Activated CD4-positive, alpha-beta T cell treated with anti-CD3 and anti-CD28 coated beads, Interleukin-2, amount 10 ng/mL, durations not matched to agents 24 days and 14 days (primary cell): ENCODE measurements at regions of chr9 and their contacts with region 1.

Region 1: DNA sequence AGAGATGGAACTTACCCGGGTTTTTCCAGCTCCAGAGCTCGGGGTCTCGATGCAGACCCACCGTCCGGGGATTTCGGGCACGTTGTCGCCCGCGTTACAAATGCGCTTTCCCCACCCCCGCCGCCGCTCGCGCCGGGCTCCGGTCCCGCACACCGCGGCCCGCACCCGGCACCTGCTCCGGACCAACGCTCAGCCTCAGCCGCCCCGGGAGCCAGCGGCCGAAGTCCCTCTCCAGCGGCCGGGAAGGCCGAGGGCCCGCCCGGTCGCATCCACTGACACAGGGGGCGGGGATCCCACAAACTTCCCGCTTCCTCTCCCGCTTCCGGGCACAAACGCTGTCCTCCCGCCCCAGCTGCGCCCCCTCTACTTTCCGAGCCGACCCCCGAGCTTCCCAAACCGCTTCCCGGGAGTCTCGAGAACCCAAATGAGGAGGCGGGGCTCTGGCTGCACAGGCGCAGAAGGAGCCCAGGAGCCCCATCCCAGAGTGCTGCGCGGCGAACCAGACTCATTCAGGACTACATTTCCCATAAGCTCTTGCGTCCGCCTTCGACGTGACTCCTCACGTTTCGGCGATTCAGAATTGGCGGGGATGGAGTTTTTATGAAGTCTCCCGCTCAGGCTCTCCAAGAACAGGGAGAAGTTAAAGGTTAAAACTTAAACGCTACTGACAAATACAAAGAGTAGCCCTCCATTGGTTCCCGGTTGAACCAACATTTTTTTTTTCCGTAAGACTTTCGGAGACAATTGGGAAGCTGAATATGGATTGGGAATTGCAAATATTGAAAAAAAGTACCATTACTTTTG is at the start of gene ZNF782:
- DNase-seq: peak; percentile 96
- H3K4me3 Mint-ChIP-seq: peak within 1 kb of the TSS; percentile 100
- H3K27ac Mint-ChIP-seq: peak within 1 kb of the TSS; percentile 99
- H3K4me1 Mint-ChIP-seq: peaks cover 42% of the 10 kb centered on the region
- H3K27me3 Mint-ChIP-seq: peaks cover 21% of the 10 kb centered on the region
- total RNA-seq, gene ZNF782: 4.3 and 5.1 TPM in 2 replicates

Region 2: GRCh38 chr9:96680812-96681499 is 173.3 kb before region 1 on chr9:
- intact Hi-C with region 1: no loop called
- DNase-seq: no peak
- H3K4me3 Mint-ChIP-seq: no peak overlapping the region
- H3K27ac Mint-ChIP-seq: no peak overlapping the region
- H3K4me1 Mint-ChIP-seq: no peaks in the 10 kb centered on the region
- H3K27me3 Mint-ChIP-seq: no peaks in the 10 kb centered on the region

Region 3: GRCh38 chr9:96777426-96777864 is 76.8 kb before region 1 on chr9:
- intact Hi-C with region 1: loop called (anchors 5 kb)
- DNase-seq: no peak
- H3K4me3 Mint-ChIP-seq: peak overlapping the region; percentile 97
- H3K27ac Mint-ChIP-seq: peak overlapping the region; percentile 95
- H3K4me1 Mint-ChIP-seq: peaks cover 18% of the 10 kb centered on the region
- H3K27me3 Mint-ChIP-seq: no peaks in the 10 kb centered on the region

Region 4: DNA sequence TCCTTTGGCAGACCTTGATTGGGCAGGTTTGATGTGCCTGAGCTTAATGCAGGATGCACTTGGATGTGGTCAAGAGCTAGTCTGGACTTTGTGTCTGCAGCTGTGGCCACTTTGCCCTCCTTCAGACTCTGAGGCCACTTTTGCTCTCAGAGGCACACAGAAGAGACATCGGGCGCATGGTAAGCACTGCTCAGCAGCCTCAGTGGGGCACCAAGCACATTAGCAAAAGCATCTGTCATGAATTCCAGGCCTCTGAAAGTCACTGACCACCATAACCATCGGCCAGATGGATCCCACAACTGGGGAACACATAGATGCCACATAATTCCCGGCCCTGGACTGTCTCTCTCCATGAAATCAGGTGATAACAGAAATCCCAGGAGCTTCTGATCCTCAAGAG is 34.3 kb after region 1 on chr9:
- intact Hi-C with region 1: no loop called
- DNase-seq: no peak
- H3K4me3 Mint-ChIP-seq: no peak overlapping the region
- H3K27ac Mint-ChIP-seq: no peak overlapping the region
- H3K4me1 Mint-ChIP-seq: no peaks in the 10 kb centered on the region
- H3K27me3 Mint-ChIP-seq: no peaks in the 10 kb centered on the region

Region 5: GRCh38 chr9:97109194-97109811 is 255.0 kb after region 1 on chr9:
- intact Hi-C with region 1: loop called (anchors 1 kb)
- DNase-seq: peak; percentile 74
- H3K4me3 Mint-ChIP-seq: no peak overlapping the region
- H3K27ac Mint-ChIP-seq: no peak overlapping the region
- H3K4me1 Mint-ChIP-seq: no peaks in the 10 kb centered on the region
- H3K27me3 Mint-ChIP-seq: peaks cover 8% of the 10 kb centered on the region

Region 6: GRCh38 chr9:97398999-97399758 is 544.9 kb after region 1 on chr9:
- intact Hi-C with region 1: loop called (anchors 1 kb)
- DNase-seq: peak; percentile 91
- H3K4me3 Mint-ChIP-seq: no peak overlapping the region
- H3K27ac Mint-ChIP-seq: no peak overlapping the region
- H3K4me1 Mint-ChIP-seq: peaks cover 21% of the 10 kb centered on the region
- H3K27me3 Mint-ChIP-seq: peaks cover 37% of the 10 kb centered on the region

Region 7: DNA sequence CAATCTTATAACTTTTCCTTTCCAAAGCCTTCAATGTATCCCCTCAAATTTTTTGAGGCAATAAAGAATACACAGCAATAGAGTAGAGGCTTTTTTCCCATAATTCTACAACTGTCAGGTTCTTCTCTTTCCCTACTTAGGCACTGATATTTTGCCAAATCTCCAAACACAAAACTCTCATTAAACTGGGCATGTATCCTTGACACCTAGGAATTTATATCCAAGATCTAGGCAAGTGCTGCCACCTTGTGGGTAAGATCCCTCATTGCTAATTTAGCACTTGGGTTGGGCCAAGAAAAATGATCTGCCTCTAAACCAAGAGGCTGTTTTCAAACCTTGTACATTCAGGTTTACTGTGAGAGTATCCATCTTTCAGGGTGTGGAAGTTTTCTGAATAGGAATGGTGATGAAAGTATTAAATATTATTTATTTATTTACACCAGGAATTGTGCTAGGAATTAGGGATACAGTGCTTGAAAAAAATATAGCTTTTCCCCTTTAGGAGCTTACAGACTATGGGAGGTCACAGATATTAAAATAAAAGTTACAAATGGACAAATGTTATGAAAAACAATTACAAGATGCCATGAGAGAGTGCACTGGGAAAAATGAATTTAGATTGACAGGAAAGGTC is 761.3 kb after region 1 on chr9:
- intact Hi-C with region 1: loop called (anchors 2 kb)
- DNase-seq: peak; percentile 89
- H3K4me3 Mint-ChIP-seq: no peak overlapping the region
- H3K27ac Mint-ChIP-seq: no peak overlapping the region
- H3K4me1 Mint-ChIP-seq: peaks cover 20% of the 10 kb centered on the region
- H3K27me3 Mint-ChIP-seq: no peaks in the 10 kb centered on the region